Activated T-helper 2 cell treated with anti-CD3 and anti-CD28 coated beads, Interferon-gamma antibody, Interleukin-2, Interleukin-4, amounts not matched to agents 10 μg/mL and 5 μg/mL and 100 μg/mL, durations not matched to agents 14 hours and 24 hours and 36 hours (primary cell): ENCODE measurements at regions of chr12 and their contacts with region 1.

Region 1: GRCh38 chr12:103799870-103800771 is 40.9 kb downstream of the NT5DC3 start:
- DNase-seq: no peak
- H3K4me3 Mint-ChIP-seq: no peak overlapping the region
- H3K27ac Mint-ChIP-seq: no peak overlapping the region
- H3K4me1 Mint-ChIP-seq: peaks cover 6% of the 10 kb centered on the region
- H3K27me3 Mint-ChIP-seq: no peaks in the 10 kb centered on the region

Region 2: GRCh38 chr12:103737881-103738280 is 62.2 kb before region 1 on chr12:
- intact Hi-C with region 1: loop called (anchors 10 kb)
- DNase-seq: no peak
- H3K4me3 Mint-ChIP-seq: no peak overlapping the region
- H3K27ac Mint-ChIP-seq: no peak overlapping the region
- H3K4me1 Mint-ChIP-seq: no peaks in the 10 kb centered on the region
- H3K27me3 Mint-ChIP-seq: peaks cover 3% of the 10 kb centered on the region